ENCODE measurements at regions of chr9 and their contacts with region 1.

Region 1: DNA sequence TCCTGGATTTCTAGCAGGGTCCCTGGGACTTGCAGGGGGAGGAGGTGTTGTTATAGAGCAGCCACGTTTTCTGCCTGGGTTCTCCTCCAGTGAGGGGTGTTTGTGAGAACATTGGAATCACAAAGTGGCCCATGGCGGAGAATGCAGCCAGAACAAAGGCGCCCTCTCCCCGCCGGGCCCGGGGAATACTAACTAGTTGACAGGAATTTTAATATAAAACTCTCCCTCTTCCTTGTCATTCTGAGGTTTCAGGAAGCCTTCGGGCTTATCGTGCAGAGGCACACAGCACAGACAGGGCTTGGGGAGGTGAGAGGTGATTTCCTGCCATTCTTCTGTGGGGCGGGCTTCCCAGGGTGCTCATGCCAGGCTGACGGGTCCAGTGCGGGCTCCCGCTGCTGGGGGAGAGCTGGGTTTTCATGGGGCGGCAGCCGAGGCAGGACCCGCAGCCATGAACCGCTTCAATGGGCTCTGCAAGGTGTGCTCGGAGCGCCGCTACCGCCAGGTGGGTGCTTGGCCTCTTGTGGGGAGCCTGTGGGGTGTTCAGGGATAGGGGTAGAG is 37.7 kb downstream of the RGS3 start:
- DNase-seq: no peak

Region 2: DNA sequence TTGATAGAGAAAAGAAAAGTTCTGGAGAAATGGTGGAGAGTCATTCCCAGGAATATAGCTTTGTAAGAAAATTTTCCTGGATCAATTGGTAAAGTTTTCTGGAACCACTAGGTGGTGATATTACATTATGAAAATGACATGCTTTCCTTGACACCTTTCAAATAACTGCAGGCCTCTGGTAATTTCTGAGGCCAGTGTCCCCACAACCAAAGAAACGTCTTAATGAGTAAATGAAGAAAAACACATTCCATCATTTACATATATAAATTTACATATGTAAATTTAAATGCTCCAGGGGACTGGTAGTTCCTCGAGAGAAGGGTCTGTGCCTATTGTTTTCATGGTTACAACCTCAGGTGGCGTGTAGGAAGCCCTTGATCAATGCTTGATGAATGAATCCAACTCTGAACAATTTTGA is 54.9 kb before region 1 on chr9:
- intact Hi-C with region 1: no loop called
- DNase-seq: no peak

Region 3: GRCh38 chr9:113548221-113549041 is 47.2 kb after region 1 on chr9:
- intact Hi-C with region 1: loop called (anchors 5 kb)
- DNase-seq: peak; percentile 88

Region 4: GRCh38 chr9:113578882-113579282 is 77.7 kb after region 1 on chr9:
- intact Hi-C with region 1: no loop called
- DNase-seq: peak; percentile 93